GM12878 (cell line): ENCODE measurements at regions of chr1 and their contacts with region 1.

Region 1: DNA sequence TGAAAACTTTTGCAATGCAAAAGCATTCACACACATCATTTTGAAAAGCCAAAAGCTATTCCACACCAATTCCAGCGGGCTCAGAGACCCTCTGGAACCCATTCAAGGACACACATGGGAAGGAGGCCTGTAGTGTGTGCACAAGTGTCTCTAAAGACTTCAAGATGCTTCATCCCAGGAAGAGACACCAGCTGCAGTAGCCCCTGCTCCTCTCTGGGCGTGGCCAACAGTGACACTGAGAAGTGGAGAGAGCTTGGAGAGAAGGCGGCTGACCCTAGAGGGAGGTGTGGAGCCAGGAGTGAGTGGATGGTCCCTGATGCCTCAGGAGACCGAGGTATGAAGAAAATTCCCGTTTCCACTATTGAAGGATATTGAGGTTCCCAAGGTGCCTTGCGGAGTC is 14.9 kb upstream of the TNNI1 start:
- DNase-seq: no peak
- ATAC-seq: peak; percentile 42; the same call in 2 of the 3 replicates
- H3K4me3 ChIP-seq: no peak overlapping the region
- H3K27ac ChIP-seq: no peak overlapping the region
- H3K4me1 ChIP-seq: peaks cover 3% of the 10 kb centered on the region; the same call in 1 of the 2 replicates
- H3K27me3 ChIP-seq: no peaks in the 10 kb centered on the region
- CTCF ChIP-seq: no peak; a peak in 1 of 6 replicates
- EP300 ChIP-seq: no peak
- POLR2A ChIP-seq: no peak
- RAD21 ChIP-seq: no peak

Region 2: GRCh38 chr1:201385299-201385891 is 51.0 kb before region 1 on chr1:
- CTCF ChIA-PET with region 1: interaction called, 27 read pairs
- POLR2A ChIA-PET with region 1: no interaction called
- RAD21 ChIA-PET with region 1: interaction called, 15 read pairs
- SMC1A ChIA-PET with region 1: interaction called, 8 read pairs
- in situ Hi-C with region 1: no loop called
- intact Hi-C with region 1: no loop called
- DNase-seq: no peak
- ATAC-seq: peak; percentile 99
- H3K4me3 ChIP-seq: no peak overlapping the region
- H3K27ac ChIP-seq: no peak overlapping the region
- H3K4me1 ChIP-seq: no peaks in the 10 kb centered on the region
- H3K27me3 ChIP-seq: no peaks in the 10 kb centered on the region; a peak in 1 of 4 replicates
- CTCF ChIP-seq: peak; percentile 93 to 97 (median 96); a peak in 5 of 6 replicates
- EP300 ChIP-seq: no peak
- POLR2A ChIP-seq: no peak
- RAD21 ChIP-seq: peak; percentile 78

Region 3: DNA sequence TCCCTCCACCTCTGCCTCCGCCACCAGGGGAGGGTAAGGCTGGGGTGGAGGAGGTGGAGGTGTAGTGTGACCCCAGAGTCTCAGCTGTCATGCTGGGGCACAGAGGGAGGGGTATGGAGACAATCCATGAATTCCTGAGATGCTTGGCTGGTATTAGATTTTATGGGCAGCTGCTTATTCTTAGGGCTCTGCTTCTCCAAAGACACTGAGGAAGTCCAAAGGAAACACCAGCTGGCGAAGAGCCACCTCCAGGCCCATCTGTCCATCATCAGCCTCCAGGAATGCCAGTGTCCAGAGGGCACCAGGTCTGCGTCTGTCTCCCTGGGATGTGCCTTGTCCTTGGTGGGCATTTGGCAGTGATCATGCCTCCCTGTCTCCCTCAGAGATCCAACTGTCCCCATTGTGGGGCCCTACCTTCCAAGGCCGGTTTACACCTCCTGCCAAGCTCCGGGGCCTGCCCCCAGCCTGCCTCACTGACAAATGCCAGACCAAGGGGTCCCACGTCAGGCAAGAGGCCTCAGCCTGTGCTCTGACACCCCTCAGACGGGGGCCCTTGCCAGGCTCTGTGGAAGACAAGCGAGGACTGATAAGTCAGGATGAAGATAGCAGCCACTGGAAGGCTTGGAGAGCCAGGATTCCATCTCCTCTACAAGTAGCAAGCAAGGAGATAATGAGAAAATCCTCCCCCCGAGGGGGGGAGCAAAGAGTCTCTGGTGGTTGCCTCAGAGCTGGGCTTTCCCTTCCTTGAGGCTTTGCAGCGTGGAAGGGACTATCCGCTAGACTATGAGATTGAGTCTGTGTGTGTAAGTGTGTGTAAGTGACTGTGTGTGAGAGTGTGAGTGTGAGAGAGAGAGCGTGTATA is 16.4 kb before region 1 on chr1:
- CTCF ChIA-PET with region 1: interaction called, 25 read pairs
- POLR2A ChIA-PET with region 1: interaction called, 4 read pairs
- RAD21 ChIA-PET with region 1: interaction called, 10 read pairs
- SMC1A ChIA-PET with region 1: interaction called, 8 read pairs
- in situ Hi-C with region 1: no loop called
- intact Hi-C with region 1: no loop called
- DNase-seq: no peak
- ATAC-seq: peak; percentile 83
- H3K4me3 ChIP-seq: no peak overlapping the region
- H3K27ac ChIP-seq: no peak overlapping the region
- H3K4me1 ChIP-seq: peaks cover 8% of the 10 kb centered on the region
- H3K27me3 ChIP-seq: no peaks in the 10 kb centered on the region; a peak in 2 of 4 replicates
- CTCF ChIP-seq: no peak
- EP300 ChIP-seq: no peak
- POLR2A ChIP-seq: no peak
- RAD21 ChIP-seq: no peak

Region 4: DNA sequence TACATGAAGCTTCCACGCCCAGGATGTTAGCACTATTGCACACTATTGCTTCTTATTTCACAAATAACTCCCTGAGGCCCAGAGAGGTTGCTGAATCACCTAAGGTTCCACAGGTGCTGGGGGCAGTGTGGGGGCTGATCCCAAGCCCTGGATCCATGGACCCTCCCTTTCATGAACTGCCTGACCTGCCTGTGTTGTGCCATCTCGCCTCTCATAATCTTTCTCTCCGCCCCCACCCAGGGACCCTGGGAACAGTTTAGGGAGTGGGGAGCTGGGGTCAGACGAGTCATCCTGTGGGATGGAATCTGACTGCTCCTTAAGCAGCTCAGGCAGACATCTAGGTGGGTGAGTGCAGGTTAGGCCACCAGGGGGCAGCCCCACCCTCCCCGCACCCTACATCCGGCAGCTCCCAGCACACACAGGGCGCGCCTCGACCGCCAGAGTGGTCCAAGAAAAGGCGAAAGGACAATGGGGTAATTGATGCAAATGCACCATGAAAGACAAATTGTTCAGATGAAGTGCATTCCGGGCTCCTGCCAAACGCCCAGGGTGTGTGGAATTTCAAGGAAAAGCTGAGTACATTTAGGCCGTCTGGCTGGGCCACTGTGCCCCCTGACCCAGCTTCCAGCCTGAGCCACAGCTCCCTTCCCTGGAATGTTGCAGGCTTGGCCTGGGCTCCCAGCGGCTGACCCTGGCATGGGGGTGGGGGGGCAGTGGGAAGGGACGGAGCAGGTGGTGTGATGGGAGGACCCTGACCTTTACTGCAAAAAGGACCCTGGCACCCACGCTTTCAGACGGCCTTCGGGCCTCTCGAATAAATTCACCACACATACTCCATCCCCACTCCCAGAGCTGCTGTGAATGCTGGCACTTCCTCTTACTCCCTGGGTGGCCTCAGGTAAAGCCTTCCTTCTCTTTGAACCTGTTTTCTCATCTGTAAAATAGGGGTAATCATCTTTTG is 11.8 kb after region 1 on chr1:
- CTCF ChIA-PET with region 1: interaction called, 71 read pairs
- POLR2A ChIA-PET with region 1: interaction called, 6 read pairs
- RAD21 ChIA-PET with region 1: interaction called, 39 read pairs
- SMC1A ChIA-PET with region 1: interaction called, 32 read pairs
- in situ Hi-C with region 1: no loop called
- intact Hi-C with region 1: no loop called
- DNase-seq: no peak
- ATAC-seq: peak; percentile 98
- H3K4me3 ChIP-seq: no peak overlapping the region
- H3K27ac ChIP-seq: no peak overlapping the region
- H3K4me1 ChIP-seq: peaks cover 16% of the 10 kb centered on the region
- H3K27me3 ChIP-seq: no peaks in the 10 kb centered on the region
- CTCF ChIP-seq: peak; percentile 87 to 95 (median 91)
- EP300 ChIP-seq: no peak
- POLR2A ChIP-seq: no peak
- RAD21 ChIP-seq: peak; percentile 77

Region 5: DNA sequence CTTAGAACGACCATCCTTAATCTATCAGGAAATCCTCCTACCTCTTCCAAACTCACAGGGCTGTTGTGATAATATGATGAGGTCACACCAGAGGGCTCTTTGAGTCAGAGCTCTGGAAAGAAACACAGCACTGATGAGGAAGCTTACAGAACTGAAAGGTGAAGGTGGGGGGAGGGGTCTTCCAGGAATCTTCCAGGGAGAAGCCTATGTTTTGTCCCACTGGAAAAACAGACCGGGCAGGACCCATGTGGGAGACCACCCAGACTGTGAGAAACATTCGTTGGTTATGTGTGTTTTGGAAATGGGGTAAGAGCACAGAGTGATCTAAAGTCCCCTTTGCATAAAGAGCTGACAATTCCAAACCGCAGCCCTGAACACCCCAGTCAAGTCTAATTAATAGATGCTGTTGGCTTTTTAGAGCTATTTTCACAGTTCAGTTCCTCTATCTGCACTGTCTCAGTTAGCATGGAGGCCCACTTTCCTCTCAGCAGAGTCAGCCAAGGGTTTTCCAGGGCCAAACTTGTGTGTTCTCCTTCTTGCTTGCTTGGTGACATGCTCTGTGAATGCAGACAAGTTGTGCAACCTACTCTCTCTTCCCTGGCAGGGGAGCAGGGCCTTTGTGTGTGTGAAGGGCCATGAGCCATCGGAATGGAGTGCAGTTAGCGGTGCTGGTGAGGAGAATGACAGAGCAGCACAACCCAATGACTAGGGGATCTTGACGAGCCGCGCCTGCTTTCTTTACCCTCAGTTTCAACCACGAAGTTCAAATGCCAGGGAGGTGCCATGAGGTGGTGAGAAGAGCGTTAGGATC is 20.3 kb after region 1 on chr1:
- CTCF ChIA-PET with region 1: interaction called, 11 read pairs
- POLR2A ChIA-PET with region 1: no interaction called
- RAD21 ChIA-PET with region 1: interaction called, 4 read pairs
- SMC1A ChIA-PET with region 1: interaction called, 6 read pairs
- in situ Hi-C with region 1: no loop called
- intact Hi-C with region 1: no loop called
- DNase-seq: no peak
- ATAC-seq: peak; percentile 54
- H3K4me3 ChIP-seq: 0 out of 2 replicates have a peak overlapping the region, but pooled peaks have one; percentile 14
- H3K27ac ChIP-seq: no peak overlapping the region; the same call in 1 of the 2 replicates
- H3K4me1 ChIP-seq: peaks cover 31% of the 10 kb centered on the region
- H3K27me3 ChIP-seq: no peaks in the 10 kb centered on the region
- CTCF ChIP-seq: no peak
- EP300 ChIP-seq: no peak
- POLR2A ChIP-seq: no peak
- RAD21 ChIP-seq: no peak

Region 6: DNA sequence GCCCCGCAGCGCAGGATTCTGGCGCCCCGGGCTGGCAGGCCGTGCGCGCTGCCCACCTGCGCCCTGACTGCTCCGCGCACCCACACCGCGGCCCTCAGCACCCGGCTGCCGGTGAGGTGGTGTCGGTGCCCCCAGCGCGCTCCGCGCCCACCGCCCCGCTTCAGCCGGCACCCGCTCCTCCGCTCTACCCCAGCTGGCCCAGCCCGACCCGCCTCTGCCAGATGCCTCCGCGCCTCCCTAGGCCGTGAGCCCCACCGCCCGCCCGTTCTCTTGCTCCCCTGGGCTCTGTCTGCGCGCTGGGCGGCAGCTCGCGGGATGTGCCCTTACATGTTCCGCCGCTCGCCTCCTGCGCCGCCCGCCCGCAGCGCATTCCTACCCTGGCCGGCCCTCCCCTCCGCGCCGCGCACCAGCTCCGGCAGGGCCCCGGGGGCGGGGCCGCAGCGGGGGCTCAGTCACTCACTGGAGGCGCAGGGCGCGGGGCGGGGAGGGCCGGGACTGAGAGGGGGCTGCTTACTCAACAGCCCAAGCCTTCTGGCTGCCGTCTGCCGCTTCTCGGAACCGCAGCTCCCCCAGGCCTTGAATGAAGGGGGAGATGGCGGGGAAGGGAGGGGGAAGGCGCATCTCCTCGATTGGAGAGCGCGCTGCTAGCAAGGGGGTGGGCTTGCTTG is 32.6 kb after region 1 on chr1 and contains the start of gene PHLDA3:
- CTCF ChIA-PET with region 1: interaction called, 9 read pairs
- POLR2A ChIA-PET with region 1: interaction called, 3 read pairs
- RAD21 ChIA-PET with region 1: interaction called, 5 read pairs
- SMC1A ChIA-PET with region 1: interaction called, 5 read pairs
- in situ Hi-C with region 1: no loop called
- intact Hi-C with region 1: loop called (anchors 2 kb)
- DNase-seq: no peak
- ATAC-seq: peak; percentile 88
- H3K4me3 ChIP-seq: peak within 1 kb of the TSS; percentile 96
- H3K27ac ChIP-seq: peak within 1 kb of the TSS; percentile 67
- H3K4me1 ChIP-seq: peaks cover 11% of the 10 kb centered on the region
- H3K27me3 ChIP-seq: no peaks in the 10 kb centered on the region
- CTCF ChIP-seq: no peak
- EP300 ChIP-seq: 0 out of 4 replicates have a peak, but pooled peaks of 1 of the 2 experiments have one; percentile 17
- POLR2A ChIP-seq: peak; percentile 89
- RAD21 ChIP-seq: no peak
- polyA plus RNA-seq, gene PHLDA3: 0.60 to 2.0 TPM